Heart right ventricle (tissue), 16 donors: ENCODE measurements at regions of chr19 and their contacts with region 1.

Region 1: DNA sequence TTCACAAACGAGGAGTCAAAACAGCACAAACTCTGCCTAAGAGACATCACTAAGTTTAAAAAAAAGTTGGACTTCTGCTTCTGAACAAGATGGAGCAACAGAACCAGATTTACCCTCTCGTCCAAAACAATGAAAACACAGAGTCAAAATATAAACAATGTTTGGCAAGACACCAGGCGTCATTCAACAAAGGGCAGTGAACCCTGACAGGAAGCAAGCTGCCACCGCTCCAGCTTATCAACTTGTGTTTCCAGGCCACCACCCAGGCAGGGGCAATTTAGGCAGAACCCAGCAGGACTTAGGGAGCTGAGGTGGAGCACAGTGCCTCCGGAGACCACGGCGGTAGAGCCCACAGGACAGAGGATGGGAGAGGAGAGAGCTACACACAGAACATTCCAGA is 8.6 kb upstream of the NAPA start:
- DNase-seq: peak in 1 of 2 donors; percentile 33
- ATAC-seq: peak; percentile 24 to 67 (median 52)
- H3K4me3 ChIP-seq: no peak overlapping the region
- H3K27ac ChIP-seq: peak overlapping the region in 9 of 10 donors; percentile 40 to 88 (median 55)
- H3K4me1 ChIP-seq: peaks cover 0 to 33% (median 16%) of the 10 kb centered on the region in 9 donors
- H3K27me3 ChIP-seq: peaks cover 0 to 17% (median 0%) of the 10 kb centered on the region in 7 donors
- CTCF ChIP-seq: no peak

Region 2: DNA sequence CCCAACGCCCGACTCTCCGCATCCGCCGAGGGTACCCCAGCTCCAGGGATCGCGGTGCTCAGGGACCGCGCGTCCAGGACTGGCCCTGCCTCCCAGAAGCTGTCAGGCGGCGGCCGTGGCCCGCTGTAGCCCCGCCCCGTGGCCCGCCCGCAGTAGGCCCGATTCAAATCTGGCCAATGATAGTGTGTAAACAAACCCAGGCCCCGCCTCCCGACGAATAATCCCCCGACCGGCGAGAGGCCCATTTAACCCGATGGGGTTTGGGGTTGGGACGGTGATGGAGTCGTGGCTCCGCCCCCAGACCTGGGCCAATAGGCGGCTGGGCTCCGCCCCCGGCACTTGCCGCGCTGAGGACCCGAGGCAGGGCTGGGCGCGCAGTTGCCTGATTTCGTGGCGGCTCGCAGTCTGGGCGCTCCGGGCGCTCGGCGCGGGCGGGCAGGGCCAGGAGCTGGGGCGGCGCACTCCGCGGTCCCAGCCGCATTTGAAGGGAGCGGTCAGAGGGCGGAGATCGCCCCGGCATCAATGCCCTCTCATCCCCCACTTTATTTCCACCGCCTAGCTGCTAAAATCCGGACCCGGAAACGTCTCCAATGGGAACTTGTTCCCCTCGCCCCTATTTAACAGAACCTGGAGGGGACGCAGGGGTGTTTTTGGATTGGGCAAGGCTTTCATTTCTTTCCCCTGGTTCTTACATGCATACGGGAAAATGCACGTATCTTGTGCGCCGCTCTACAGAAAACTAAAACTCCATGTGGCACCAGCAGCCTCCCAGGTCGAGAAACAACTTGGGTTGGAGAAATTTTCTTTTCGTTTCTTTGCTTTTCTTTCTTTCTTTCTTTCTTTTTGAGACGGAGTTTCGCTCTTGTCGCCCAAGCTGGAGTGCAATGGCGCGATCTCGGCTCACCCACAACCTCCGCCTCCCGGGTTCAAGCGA is 77.0 kb after region 1 on chr19:
- intact Hi-C with region 1: loop called in 5 of 10 experiments (anchors 5 to 10 kb)
- DNase-seq: peak; percentile 99 to 100
- ATAC-seq: peak; percentile 98 to 100 (median 98)
- H3K4me3 ChIP-seq: peak overlapping the region; percentile 16 to 73 (median 64)
- H3K27ac ChIP-seq: peak overlapping the region; percentile 44 to 92 (median 86)
- H3K4me1 ChIP-seq: peaks cover 2 to 46% (median 22%) of the 10 kb centered on the region in 9 donors
- H3K27me3 ChIP-seq: no peaks in the 10 kb centered on the region
- CTCF ChIP-seq: peak in 1 of 9 donors; percentile 13

Region 3: GRCh38 chr19:47697863-47698609 is 174.6 kb after region 1 on chr19:
- intact Hi-C with region 1: loop called in 9 of 10 experiments (anchors 5 to 10 kb)
- DNase-seq: peak; percentile 73 to 75
- ATAC-seq: peak; percentile 79 to 90 (median 84)
- H3K4me3 ChIP-seq: no peak overlapping the region
- H3K27ac ChIP-seq: peak overlapping the region in 7 of 10 donors; percentile 25 to 73 (median 66)
- H3K4me1 ChIP-seq: peaks cover 0 to 10% (median 6%) of the 10 kb centered on the region in 9 donors
- H3K27me3 ChIP-seq: no peaks in the 10 kb centered on the region
- CTCF ChIP-seq: peak; percentile 91 to 99 (median 96)